ENCODE measurements at regions of chr4 and their contacts with region 1.

Region 1: GRCh38 chr4:153466081-153466948 is at the start of gene TMEM131L:
- DNase-seq: peak; percentile 53
- ATAC-seq: peak; percentile 73
- H3K4me3 ChIP-seq: peak within 1 kb of the TSS; percentile 90
- H3K27ac ChIP-seq: peak within 1 kb of the TSS; percentile 88
- H3K4me1 ChIP-seq: peaks cover 20% of the 10 kb centered on the region
- H3K27me3 ChIP-seq: no peaks in the 10 kb centered on the region
- CTCF ChIP-seq: no peak
- total RNA-seq, gene TMEM131L: 7.7 and 10.3 TPM in 2 replicates

Region 2: GRCh38 chr4:152870606-152871005 is 595.7 kb before region 1 on chr4:
- CTCF ChIA-PET with region 1: no interaction called
- POLR2A ChIA-PET with region 1: no interaction called
- intact Hi-C with region 1: no loop called
- DNase-seq: no peak
- ATAC-seq: no peak
- H3K4me3 ChIP-seq: no peak overlapping the region
- H3K27ac ChIP-seq: no peak overlapping the region
- H3K4me1 ChIP-seq: no peaks in the 10 kb centered on the region
- H3K27me3 ChIP-seq: no peaks in the 10 kb centered on the region
- CTCF ChIP-seq: no peak

Region 3: DNA sequence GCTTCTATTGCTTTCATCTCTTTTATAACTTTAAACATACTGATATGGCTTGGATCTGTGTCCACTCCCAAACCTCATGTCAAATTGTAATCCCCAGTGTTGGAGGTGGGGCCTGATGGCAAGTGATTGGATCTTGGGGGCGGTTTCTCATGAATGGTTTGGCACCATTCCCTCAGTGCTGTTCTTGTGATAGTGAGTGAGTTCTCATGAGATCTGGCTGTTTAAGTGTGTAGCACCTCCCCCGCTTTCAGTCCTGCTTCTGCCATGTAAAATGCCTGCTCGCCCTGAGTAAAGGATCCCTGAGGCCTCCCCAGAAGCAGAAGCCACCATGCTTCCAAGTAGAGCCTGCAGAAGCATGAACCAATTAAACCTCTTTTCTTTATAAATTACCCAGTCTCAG is 104.1 kb before region 1 on chr4:
- CTCF ChIA-PET with region 1: no interaction called
- POLR2A ChIA-PET with region 1: no interaction called
- intact Hi-C with region 1: no loop called
- DNase-seq: no peak
- ATAC-seq: no peak
- H3K4me3 ChIP-seq: no peak overlapping the region
- H3K27ac ChIP-seq: no peak overlapping the region
- H3K4me1 ChIP-seq: no peaks in the 10 kb centered on the region
- H3K27me3 ChIP-seq: no peaks in the 10 kb centered on the region
- CTCF ChIP-seq: no peak

Region 4: GRCh38 chr4:153432968-153433753 is 33.2 kb before region 1 on chr4:
- CTCF ChIA-PET with region 1: interaction called, 3 read pairs
- POLR2A ChIA-PET with region 1: no interaction called
- intact Hi-C with region 1: loop called (anchors 1 kb)
- DNase-seq: peak; percentile 91
- ATAC-seq: peak; percentile 91
- H3K4me3 ChIP-seq: no peak overlapping the region
- H3K27ac ChIP-seq: peak overlapping the region; percentile 51
- H3K4me1 ChIP-seq: peaks cover 7% of the 10 kb centered on the region
- H3K27me3 ChIP-seq: no peaks in the 10 kb centered on the region
- CTCF ChIP-seq: peak; percentile 85

Region 5: GRCh38 chr4:153486281-153487151 is 20.2 kb after region 1 on chr4:
- CTCF ChIA-PET with region 1: interaction called, 4 read pairs
- POLR2A ChIA-PET with region 1: no interaction called
- intact Hi-C with region 1: loop called (anchors 1 kb)
- DNase-seq: peak; percentile 93
- ATAC-seq: peak; percentile 80
- H3K4me3 ChIP-seq: peak overlapping the region; percentile 61
- H3K27ac ChIP-seq: peak overlapping the region; percentile 99
- H3K4me1 ChIP-seq: peaks cover 54% of the 10 kb centered on the region
- H3K27me3 ChIP-seq: no peaks in the 10 kb centered on the region
- CTCF ChIP-seq: no peak

Region 6: GRCh38 chr4:153555730-153556433 is 89.6 kb after region 1 on chr4:
- CTCF ChIA-PET with region 1: no interaction called
- POLR2A ChIA-PET with region 1: no interaction called
- intact Hi-C with region 1: loop called (anchors 5 kb)
- DNase-seq: peak; percentile 34
- ATAC-seq: peak; percentile 83
- H3K4me3 ChIP-seq: no peak overlapping the region
- H3K27ac ChIP-seq: peak overlapping the region; percentile 53
- H3K4me1 ChIP-seq: peaks cover 24% of the 10 kb centered on the region
- H3K27me3 ChIP-seq: no peaks in the 10 kb centered on the region
- CTCF ChIP-seq: no peak

Measured in PC-3 (cell line).